ENCODE measurements at regions of chr2 and their contacts with region 1.

Region 1: GRCh38 chr2:226984750-226985582 is 149.1 kb downstream of the RHBDD1 start:
- DNase-seq: no peak
- H3K4me3 ChIP-seq: no peak overlapping the region
- H3K27ac ChIP-seq: no peak overlapping the region
- H3K4me1 ChIP-seq: peaks cover 0 to 3% of the 10 kb centered on the region in 2 donors
- H3K27me3 ChIP-seq: no peaks in the 10 kb centered on the region
- CTCF ChIP-seq: peak; percentile 71 to 74 (median 73)

Region 2: GRCh38 chr2:225668606-225669266 is 1316.2 kb before region 1 on chr2:
- intact Hi-C with region 1: loop called (anchors 1 kb)
- DNase-seq: no peak
- H3K4me3 ChIP-seq: no peak overlapping the region
- H3K27ac ChIP-seq: no peak overlapping the region
- H3K4me1 ChIP-seq: no peaks in the 10 kb centered on the region
- H3K27me3 ChIP-seq: no peaks in the 10 kb centered on the region
- CTCF ChIP-seq: peak; percentile 14 to 60 (median 46)

Region 3: GRCh38 chr2:225894240-225894980 is 1090.6 kb before region 1 on chr2:
- intact Hi-C with region 1: loop called (anchors 5 kb)
- DNase-seq: no peak
- H3K4me3 ChIP-seq: no peak overlapping the region
- H3K27ac ChIP-seq: no peak overlapping the region
- H3K4me1 ChIP-seq: peaks cover 0 to 6% of the 10 kb centered on the region in 2 donors
- H3K27me3 ChIP-seq: no peaks in the 10 kb centered on the region
- CTCF ChIP-seq: no peak

Region 4: GRCh38 chr2:226159754-226160479 is 825.0 kb before region 1 on chr2:
- intact Hi-C with region 1: no loop called
- DNase-seq: no peak
- H3K4me3 ChIP-seq: no peak overlapping the region
- H3K27ac ChIP-seq: no peak overlapping the region
- H3K4me1 ChIP-seq: no peaks in the 10 kb centered on the region
- H3K27me3 ChIP-seq: no peaks in the 10 kb centered on the region
- CTCF ChIP-seq: no peak

Region 5: GRCh38 chr2:227016894-227017293 is 31.9 kb after region 1 on chr2:
- intact Hi-C with region 1: no loop called
- DNase-seq: no peak
- H3K4me3 ChIP-seq: no peak overlapping the region
- H3K27ac ChIP-seq: no peak overlapping the region
- H3K4me1 ChIP-seq: no peaks in the 10 kb centered on the region
- H3K27me3 ChIP-seq: no peaks in the 10 kb centered on the region
- CTCF ChIP-seq: no peak